ENCODE measurements at regions of chr18 and their contacts with region 1.

Region 1: GRCh38 chr18:11149441-11150270 is at the start of gene PIEZO2:
- DNase-seq: peak; percentile 43
- ATAC-seq: peak; percentile 89
- H3K4me3 ChIP-seq: peak within 1 kb of the TSS; percentile 95
- H3K27ac ChIP-seq: peak within 1 kb of the TSS; percentile 88
- H3K4me1 ChIP-seq: peaks cover 23% of the 10 kb centered on the region
- H3K27me3 ChIP-seq: no peaks in the 10 kb centered on the region
- CTCF ChIP-seq: no peak
- EP300 ChIP-seq: no peak
- POLR2A ChIP-seq: peak; percentile 89
- RAD21 ChIP-seq: no peak
- polyA plus RNA-seq, gene PIEZO2: 6.7 to 7.1 TPM

Region 2: GRCh38 chr18:9971313-9971920 is 1178.2 kb before region 1 on chr18:
- CTCF ChIA-PET with region 1: interaction called, 24 read pairs
- POLR2A ChIA-PET with region 1: interaction called, 3 read pairs
- RAD21 ChIA-PET with region 1: interaction called, 15 read pairs
- SMC1A ChIA-PET with region 1: interaction called, 4 read pairs
- in situ Hi-C with region 1: loop called (anchors 5 kb)
- intact Hi-C with region 1: loop called (anchors 10 kb)
- DNase-seq: peak; percentile 27
- ATAC-seq: peak; percentile 85
- H3K4me3 ChIP-seq: no peak overlapping the region
- H3K27ac ChIP-seq: no peak overlapping the region
- H3K4me1 ChIP-seq: no peaks in the 10 kb centered on the region
- H3K27me3 ChIP-seq: no peaks in the 10 kb centered on the region; a peak in 2 of 4 replicates
- CTCF ChIP-seq: peak; percentile 53 to 92 (median 67); a peak in 5 of 6 replicates
- EP300 ChIP-seq: no peak
- POLR2A ChIP-seq: no peak
- RAD21 ChIP-seq: peak; percentile 98

Region 3: GRCh38 chr18:10776493-10776892 is 373.2 kb before region 1 on chr18:
- CTCF ChIA-PET with region 1: interaction called, 8 read pairs
- POLR2A ChIA-PET with region 1: interaction called, 3 read pairs
- RAD21 ChIA-PET with region 1: interaction called, 4 read pairs
- SMC1A ChIA-PET with region 1: interaction called, 10 read pairs
- in situ Hi-C with region 1: no loop called
- intact Hi-C with region 1: no loop called
- DNase-seq: no peak
- ATAC-seq: no peak
- H3K4me3 ChIP-seq: no peak overlapping the region
- H3K27ac ChIP-seq: no peak overlapping the region
- H3K4me1 ChIP-seq: no peaks in the 10 kb centered on the region
- H3K27me3 ChIP-seq: no peaks in the 10 kb centered on the region
- CTCF ChIP-seq: no peak
- EP300 ChIP-seq: no peak
- POLR2A ChIP-seq: no peak
- RAD21 ChIP-seq: no peak

Region 4: GRCh38 chr18:10878703-10879102 is 271.0 kb before region 1 on chr18:
- CTCF ChIA-PET with region 1: interaction called, 9 read pairs
- POLR2A ChIA-PET with region 1: interaction called, 5 read pairs
- RAD21 ChIA-PET with region 1: interaction called, 7 read pairs
- SMC1A ChIA-PET with region 1: interaction called, 13 read pairs
- in situ Hi-C with region 1: no loop called
- intact Hi-C with region 1: no loop called
- DNase-seq: peak; percentile 93
- ATAC-seq: peak; percentile 82
- H3K4me3 ChIP-seq: no peak overlapping the region
- H3K27ac ChIP-seq: peak overlapping the region; percentile 88
- H3K4me1 ChIP-seq: peaks cover 49% of the 10 kb centered on the region
- H3K27me3 ChIP-seq: no peaks in the 10 kb centered on the region
- CTCF ChIP-seq: no peak
- EP300 ChIP-seq: peak; percentile 90 to 96
- POLR2A ChIP-seq: no peak
- RAD21 ChIP-seq: 0 out of 2 replicates have a peak, but pooled peaks have one; percentile 17

Region 5: DNA sequence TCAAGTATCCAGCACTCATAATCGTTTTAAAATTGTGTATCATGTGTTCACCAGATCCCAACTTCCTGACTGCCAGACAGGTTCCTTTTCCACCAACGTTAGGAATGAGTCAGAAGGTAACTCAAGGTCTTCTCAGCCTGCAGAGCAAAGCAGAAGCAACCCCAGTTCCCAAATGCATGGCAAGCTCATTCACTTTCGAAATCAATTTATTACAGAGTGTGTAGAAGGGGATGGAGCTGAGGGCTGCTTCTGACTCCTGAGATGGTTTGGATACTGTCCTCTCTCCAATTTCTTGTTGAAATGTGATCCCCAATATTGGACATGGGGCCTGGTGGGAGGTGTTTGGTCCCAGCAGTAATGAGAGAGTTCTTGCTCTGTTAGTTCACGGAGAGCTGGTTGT is 114.8 kb before region 1 on chr18:
- CTCF ChIA-PET with region 1: interaction called, 87 read pairs
- POLR2A ChIA-PET with region 1: interaction called, 5 read pairs
- RAD21 ChIA-PET with region 1: interaction called, 64 read pairs
- SMC1A ChIA-PET with region 1: interaction called, 75 read pairs
- in situ Hi-C with region 1: no loop called
- intact Hi-C with region 1: loop called (anchors 2 kb)
- DNase-seq: no peak
- ATAC-seq: peak; percentile 83
- H3K4me3 ChIP-seq: peak overlapping the region; percentile 6; the same call in 1 of the 2 replicates
- H3K27ac ChIP-seq: peak overlapping the region; percentile 52
- H3K4me1 ChIP-seq: peaks cover 38% of the 10 kb centered on the region
- H3K27me3 ChIP-seq: no peaks in the 10 kb centered on the region
- CTCF ChIP-seq: no peak
- EP300 ChIP-seq: no peak
- POLR2A ChIP-seq: no peak
- RAD21 ChIP-seq: no peak

Region 6: GRCh38 chr18:11136241-11136640 is 13.4 kb before region 1 on chr18:
- CTCF ChIA-PET with region 1: interaction called, 11 read pairs
- POLR2A ChIA-PET with region 1: interaction called, 5 read pairs
- RAD21 ChIA-PET with region 1: interaction called, 11 read pairs
- SMC1A ChIA-PET with region 1: interaction called, 10 read pairs
- in situ Hi-C with region 1: no loop called
- intact Hi-C with region 1: no loop called
- DNase-seq: no peak
- ATAC-seq: no peak
- H3K4me3 ChIP-seq: no peak overlapping the region
- H3K27ac ChIP-seq: no peak overlapping the region
- H3K4me1 ChIP-seq: no peaks in the 10 kb centered on the region
- H3K27me3 ChIP-seq: no peaks in the 10 kb centered on the region
- CTCF ChIP-seq: no peak
- EP300 ChIP-seq: no peak
- POLR2A ChIP-seq: no peak
- RAD21 ChIP-seq: no peak

Measured in GM12878 (cell line).